ENCODE measurements at regions of chr9 and their contacts with region 1.

Region 1: GRCh38 chr9:126392662-126393371 is 66.2 kb downstream of the MVB12B start:
- DNase-seq: no peak
- ATAC-seq: no peak
- H3K4me3 ChIP-seq: no peak overlapping the region
- H3K4me3 Mint-ChIP-seq: no peak overlapping the region
- H3K27ac ChIP-seq: no peak overlapping the region
- H3K27ac Mint-ChIP-seq: no peak overlapping the region
- H3K4me1 ChIP-seq: peaks cover 2 to 27% of the 10 kb centered on the region in 2 experiments
- H3K4me1 Mint-ChIP-seq: peaks cover 16 to 38% (median 38%) of the 10 kb centered on the region in 3 donors
- H3K27me3 ChIP-seq: no peaks in the 10 kb centered on the region
- H3K27me3 Mint-ChIP-seq: no peaks in the 10 kb centered on the region

Region 2: GRCh38 chr9:125261501-125262293 is 1131.1 kb before region 1 on chr9 and contains the start of gene GAPVD1:
- CTCF ChIA-PET with region 1: no interaction called
- POLR2A ChIA-PET with region 1: interaction called in 1 of 2 experiments, 10 read pairs
- DNase-seq: peak; percentile 73 to 91 (median 84)
- ATAC-seq: peak; percentile 95 to 99 (median 99)
- H3K4me3 ChIP-seq: peak within 1 kb of the TSS; percentile 78 to 86
- H3K4me3 Mint-ChIP-seq: peak within 1 kb of the TSS; percentile 88 to 96 (median 96)
- H3K27ac ChIP-seq: peak within 1 kb of the TSS; percentile 75
- H3K27ac Mint-ChIP-seq: peak within 1 kb of the TSS; percentile 89 to 93
- H3K4me1 ChIP-seq: peaks cover 19 to 33% of the 10 kb centered on the region in 2 experiments
- H3K4me1 Mint-ChIP-seq: peaks cover 33 to 44% (median 41%) of the 10 kb centered on the region in 3 donors
- H3K27me3 ChIP-seq: no peaks in the 10 kb centered on the region
- H3K27me3 Mint-ChIP-seq: no peaks in the 10 kb centered on the region
- total RNA-seq, gene GAPVD1: 54.6 to 71.2 (median 57.4) TPM

Region 3: DNA sequence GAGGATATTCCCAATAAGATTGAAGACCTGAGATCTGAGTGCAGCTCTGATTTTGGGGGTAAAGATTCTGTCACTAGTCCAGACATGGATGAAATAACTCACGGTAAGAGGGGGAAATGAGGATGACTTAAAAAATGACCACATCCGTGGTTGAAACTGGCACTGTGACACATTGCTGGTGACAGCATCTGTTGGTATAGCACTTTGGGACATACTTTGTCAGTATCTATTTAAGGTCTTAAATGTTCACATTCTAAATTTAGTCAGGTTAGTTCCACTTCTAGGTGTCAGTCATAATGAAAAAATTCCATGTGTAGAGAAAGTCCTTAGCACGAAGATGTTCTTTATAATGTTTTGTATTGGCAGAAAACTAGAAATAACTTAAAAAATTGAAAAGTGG is 1060.3 kb before region 1 on chr9:
- CTCF ChIA-PET with region 1: no interaction called
- POLR2A ChIA-PET with region 1: no interaction called
- DNase-seq: no peak
- ATAC-seq: no peak
- H3K4me3 ChIP-seq: no peak overlapping the region
- H3K4me3 Mint-ChIP-seq: no peak overlapping the region
- H3K27ac ChIP-seq: no peak overlapping the region
- H3K27ac Mint-ChIP-seq: peak overlapping the region in 1 of 2 donors; percentile 26
- H3K4me1 ChIP-seq: no peaks in the 10 kb centered on the region
- H3K4me1 Mint-ChIP-seq: peaks cover 0 to 3% (median 2%) of the 10 kb centered on the region in 3 donors
- H3K27me3 ChIP-seq: no peaks in the 10 kb centered on the region
- H3K27me3 Mint-ChIP-seq: no peaks in the 10 kb centered on the region